SK-N-SH (cell line): ENCODE measurements at regions of chr2 and their contacts with region 1.

Region 1: GRCh38 chr2:98580656-98581284 is 27.5 kb downstream of the COA5 start:
- DNase-seq: no peak
- H3K4me3 ChIP-seq: no peak overlapping the region
- H3K27ac ChIP-seq: no peak overlapping the region
- H3K4me1 ChIP-seq: no peaks in the 10 kb centered on the region
- H3K27me3 ChIP-seq: no peaks in the 10 kb centered on the region
- CTCF ChIP-seq: no peak
- EP300 ChIP-seq: no peak
- RAD21 ChIP-seq: no peak

Region 2: DNA sequence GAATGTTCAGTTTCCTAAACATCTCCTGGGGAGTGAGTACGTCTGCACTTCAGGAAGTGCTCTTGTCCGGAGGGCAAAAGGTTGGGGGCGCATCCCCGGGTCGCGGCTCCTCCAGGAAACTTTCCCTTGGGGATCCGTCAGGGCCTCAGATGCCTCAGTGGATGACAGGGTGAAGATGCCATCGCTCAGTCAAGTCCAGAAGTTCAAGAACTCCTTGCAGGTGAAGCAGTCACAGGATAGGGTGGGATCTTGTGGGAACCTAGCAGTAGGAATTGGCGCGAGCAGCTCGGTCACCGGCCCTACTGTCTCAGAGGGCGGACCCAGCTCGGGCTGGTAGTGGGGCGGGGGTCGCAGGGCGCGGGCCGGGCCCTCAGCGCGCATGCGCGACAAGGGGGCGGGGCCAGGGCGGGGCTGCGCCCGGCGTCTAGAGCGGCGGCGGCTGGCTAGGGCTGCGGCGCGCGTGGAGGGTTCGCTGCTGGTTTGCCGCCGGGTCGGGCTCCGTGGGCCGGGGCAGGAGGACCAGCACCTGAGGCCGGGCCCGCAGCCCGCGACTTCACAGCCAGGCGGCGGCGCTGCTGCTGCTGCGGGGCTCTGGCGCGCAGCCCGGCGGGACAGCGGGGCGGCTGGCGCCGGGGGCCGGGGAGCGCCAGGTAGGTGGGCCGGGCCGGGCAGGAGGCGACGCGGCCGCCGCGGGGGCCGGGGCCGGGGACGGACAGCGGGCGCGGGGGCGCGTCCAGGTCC is 136.2 kb before region 1 on chr2 and contains the start of gene INPP4A:
- CTCF ChIA-PET with region 1: no interaction called
- POLR2A ChIA-PET with region 1: no interaction called
- DNase-seq: peak; percentile 98
- H3K4me3 ChIP-seq: peak within 1 kb of the TSS; percentile 67 to 84
- H3K27ac ChIP-seq: peak within 1 kb of the TSS; percentile 50 to 67
- H3K4me1 ChIP-seq: peaks cover 8 to 18% of the 10 kb centered on the region in 2 experiments; a peak in 3 of 4 replicates
- H3K27me3 ChIP-seq: no peaks in the 10 kb centered on the region
- CTCF ChIP-seq: no peak
- EP300 ChIP-seq: no peak
- RAD21 ChIP-seq: no peak
- polyA plus RNA-seq, gene INPP4A: 15.0 and 18.3 TPM in 2 replicates

Region 3: DNA sequence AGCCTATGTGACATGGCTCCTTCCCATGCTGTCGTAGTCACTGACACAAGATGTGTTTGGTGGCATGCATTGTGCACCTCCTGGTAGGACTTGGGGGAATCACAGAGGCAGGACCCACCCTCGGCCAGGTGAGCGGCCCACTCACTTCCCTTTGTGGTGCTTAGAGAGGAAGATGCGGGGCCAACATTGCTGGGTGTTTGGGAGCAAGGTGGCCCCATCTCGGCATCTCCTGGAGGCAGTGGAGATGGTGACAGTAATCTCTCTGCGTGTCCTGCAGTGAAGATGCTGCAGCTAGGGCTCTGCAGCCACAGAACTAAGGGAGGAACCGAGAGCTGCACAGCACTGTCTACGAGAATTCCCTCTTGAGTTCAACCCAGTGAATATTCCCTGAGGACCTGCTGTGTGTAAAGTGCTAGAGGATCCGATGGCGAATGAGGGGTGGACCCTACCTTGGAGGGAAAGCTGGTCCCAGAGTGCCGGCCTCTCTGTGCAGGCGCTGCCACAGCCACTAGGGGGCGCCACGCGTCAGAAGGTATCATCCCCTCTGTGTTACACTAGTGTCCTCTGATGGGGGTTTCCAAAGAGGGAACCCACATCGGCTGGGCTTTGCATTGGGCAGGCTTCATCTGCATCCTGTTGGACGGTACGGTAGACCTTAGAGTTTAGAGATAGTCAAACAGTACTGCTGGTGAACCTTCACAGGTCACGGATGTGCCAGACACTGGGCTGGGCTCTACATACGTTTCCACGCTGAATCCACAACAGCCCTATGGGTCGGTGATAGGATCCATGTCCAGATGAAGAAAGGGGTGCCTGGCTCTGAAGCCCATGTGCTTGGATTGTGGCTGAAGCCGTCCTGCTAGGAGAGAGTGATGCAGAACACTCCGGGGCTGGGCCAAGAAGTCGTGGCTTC is 11.6 kb before region 1 on chr2:
- CTCF ChIA-PET with region 1: interaction called, 10 read pairs
- POLR2A ChIA-PET with region 1: no interaction called
- DNase-seq: peak; percentile 84
- H3K4me3 ChIP-seq: no peak overlapping the region; a peak in 1 of 4 replicates
- H3K27ac ChIP-seq: no peak overlapping the region; a peak in 1 of 4 replicates
- H3K4me1 ChIP-seq: no peaks in the 10 kb centered on the region
- H3K27me3 ChIP-seq: no peaks in the 10 kb centered on the region
- CTCF ChIP-seq: peak; percentile 83
- EP300 ChIP-seq: no peak
- RAD21 ChIP-seq: peak; percentile 54

Region 4: GRCh38 chr2:98601532-98602132 is 20.9 kb after region 1 on chr2:
- CTCF ChIA-PET with region 1: interaction called, 10 read pairs
- POLR2A ChIA-PET with region 1: interaction called, 4 read pairs
- DNase-seq: peak; percentile 65
- H3K4me3 ChIP-seq: no peak overlapping the region
- H3K27ac ChIP-seq: no peak overlapping the region
- H3K4me1 ChIP-seq: peaks cover 0 to 30% of the 10 kb centered on the region in 2 experiments; a peak in 2 of 4 replicates
- H3K27me3 ChIP-seq: no peaks in the 10 kb centered on the region
- CTCF ChIP-seq: peak; percentile 67
- EP300 ChIP-seq: no peak
- RAD21 ChIP-seq: peak; percentile 79